MCF 10A (cell line): ENCODE measurements at regions of chr5 and their contacts with region 1.

Region 1: GRCh38 chr5:151651997-151652645 is 34.6 kb downstream of the SPARC start:
- DNase-seq: peak; percentile 94
- H3K4me3 Mint-ChIP-seq: no peak overlapping the region
- H3K27ac Mint-ChIP-seq: no peak overlapping the region
- H3K4me1 Mint-ChIP-seq: peaks cover 10% of the 10 kb centered on the region
- H3K27me3 Mint-ChIP-seq: no peaks in the 10 kb centered on the region
- CTCF ChIP-seq: peak; percentile 99

Region 2: GRCh38 chr5:151480384-151481293 is 171.5 kb before region 1 on chr5:
- CTCF ChIA-PET with region 1: interaction called, 10 read pairs
- POLR2A ChIA-PET with region 1: no interaction called
- intact Hi-C with region 1: no loop called
- DNase-seq: no peak
- H3K4me3 Mint-ChIP-seq: no peak overlapping the region
- H3K27ac Mint-ChIP-seq: no peak overlapping the region
- H3K4me1 Mint-ChIP-seq: no peaks in the 10 kb centered on the region
- H3K27me3 Mint-ChIP-seq: no peaks in the 10 kb centered on the region
- CTCF ChIP-seq: no peak

Region 3: DNA sequence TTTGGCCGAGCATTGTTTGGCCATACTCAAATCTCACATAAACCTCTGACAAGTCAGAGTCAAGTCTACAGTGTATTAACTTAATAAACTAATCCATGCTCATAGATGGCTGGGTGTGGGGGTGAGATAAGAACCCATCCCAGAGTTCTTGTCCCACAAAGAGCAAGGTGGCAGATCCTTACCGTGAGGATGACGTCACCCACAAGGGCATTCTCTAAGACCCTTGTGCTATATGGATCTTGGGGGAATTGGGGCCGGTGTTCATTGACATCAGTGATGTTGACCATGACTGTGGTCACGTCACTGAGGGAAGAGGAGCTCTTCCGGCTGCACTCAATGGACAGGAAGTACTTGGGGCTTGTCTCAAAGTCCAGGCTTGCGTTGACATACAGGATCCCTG is 123.1 kb before region 1 on chr5:
- CTCF ChIA-PET with region 1: interaction called, 72 read pairs
- POLR2A ChIA-PET with region 1: interaction called, 9 read pairs
- intact Hi-C with region 1: no loop called
- DNase-seq: no peak
- H3K4me3 Mint-ChIP-seq: no peak overlapping the region
- H3K27ac Mint-ChIP-seq: no peak overlapping the region
- H3K4me1 Mint-ChIP-seq: peaks cover 6% of the 10 kb centered on the region
- H3K27me3 Mint-ChIP-seq: no peaks in the 10 kb centered on the region
- CTCF ChIP-seq: no peak

Region 4: DNA sequence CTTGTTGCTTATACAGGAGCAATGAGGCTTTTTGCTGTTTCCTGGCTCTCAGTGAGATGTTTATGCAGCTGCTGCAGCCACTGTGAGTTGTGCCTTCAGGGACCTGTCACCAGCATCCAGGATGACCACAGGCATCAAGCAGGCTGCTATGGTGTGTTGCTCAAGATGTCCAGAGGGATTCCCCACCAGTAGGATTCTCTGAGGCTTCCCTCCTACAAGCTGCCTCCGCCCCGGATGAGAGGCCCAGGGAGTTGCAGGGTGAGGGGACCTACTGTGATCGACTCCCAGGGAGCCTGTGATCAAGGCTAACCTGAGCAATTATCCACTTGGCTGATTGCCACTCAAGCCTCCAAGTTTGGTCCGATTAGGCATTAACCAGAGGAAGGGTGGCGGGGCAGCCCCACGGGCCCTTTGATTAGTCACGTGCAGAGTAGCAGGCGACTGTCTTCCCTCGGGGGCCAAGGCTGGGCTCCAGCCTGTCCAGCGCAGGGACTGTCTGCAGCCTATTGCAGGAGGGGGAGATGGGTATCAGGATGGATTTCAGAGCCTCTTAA is 59.2 kb before region 1 on chr5:
- CTCF ChIA-PET with region 1: interaction called, 45 read pairs
- POLR2A ChIA-PET with region 1: interaction called, 5 read pairs
- intact Hi-C with region 1: no loop called
- DNase-seq: no peak
- H3K4me3 Mint-ChIP-seq: no peak overlapping the region
- H3K27ac Mint-ChIP-seq: no peak overlapping the region
- H3K4me1 Mint-ChIP-seq: peaks cover 40% of the 10 kb centered on the region
- H3K27me3 Mint-ChIP-seq: no peaks in the 10 kb centered on the region
- CTCF ChIP-seq: no peak

Region 5: GRCh38 chr5:151637676-151638075 is 14.4 kb before region 1 on chr5:
- CTCF ChIA-PET with region 1: interaction called, 138 read pairs
- POLR2A ChIA-PET with region 1: interaction called, 52 read pairs
- intact Hi-C with region 1: no loop called
- DNase-seq: peak; percentile 66
- H3K4me3 Mint-ChIP-seq: no peak overlapping the region
- H3K27ac Mint-ChIP-seq: peak overlapping the region; percentile 14
- H3K4me1 Mint-ChIP-seq: peaks cover 34% of the 10 kb centered on the region
- H3K27me3 Mint-ChIP-seq: no peaks in the 10 kb centered on the region
- CTCF ChIP-seq: no peak

Region 6: DNA sequence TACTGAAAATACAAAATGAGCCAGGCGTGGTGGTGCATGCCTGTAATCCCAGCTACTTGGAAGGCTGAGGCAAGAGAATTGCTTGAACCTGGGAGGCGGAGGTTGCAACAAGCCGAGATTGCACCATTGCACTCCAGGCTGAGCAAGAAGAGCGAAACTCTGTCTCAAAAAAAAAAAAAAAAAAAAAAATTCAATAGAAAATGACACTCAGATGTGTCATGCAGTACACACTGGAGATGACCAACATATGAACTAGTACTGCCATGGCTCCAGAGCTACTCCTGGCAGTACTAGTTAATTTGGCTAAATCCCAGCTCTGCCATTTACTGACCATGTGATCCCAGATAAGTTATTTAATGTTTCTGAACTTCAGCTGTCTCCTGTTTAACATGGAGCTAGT is 99.0 kb after region 1 on chr5:
- CTCF ChIA-PET with region 1: interaction called, 652 read pairs
- POLR2A ChIA-PET with region 1: interaction called, 3 read pairs
- intact Hi-C with region 1: no loop called
- DNase-seq: peak; percentile 78
- H3K4me3 Mint-ChIP-seq: no peak overlapping the region
- H3K27ac Mint-ChIP-seq: peak overlapping the region; percentile 61
- H3K4me1 Mint-ChIP-seq: peaks cover 8% of the 10 kb centered on the region
- H3K27me3 Mint-ChIP-seq: no peaks in the 10 kb centered on the region
- CTCF ChIP-seq: no peak